RWPE1 (cell line): ENCODE measurements at regions of chr1 and their contacts with region 1.

Region 1: GRCh38 chr1:40763742-40764532 is 19.6 kb upstream of the KCNQ4 start:
- DNase-seq: no peak
- H3K27ac ChIP-seq: no peak overlapping the region
- CTCF ChIP-seq: no peak

Region 2: DNA sequence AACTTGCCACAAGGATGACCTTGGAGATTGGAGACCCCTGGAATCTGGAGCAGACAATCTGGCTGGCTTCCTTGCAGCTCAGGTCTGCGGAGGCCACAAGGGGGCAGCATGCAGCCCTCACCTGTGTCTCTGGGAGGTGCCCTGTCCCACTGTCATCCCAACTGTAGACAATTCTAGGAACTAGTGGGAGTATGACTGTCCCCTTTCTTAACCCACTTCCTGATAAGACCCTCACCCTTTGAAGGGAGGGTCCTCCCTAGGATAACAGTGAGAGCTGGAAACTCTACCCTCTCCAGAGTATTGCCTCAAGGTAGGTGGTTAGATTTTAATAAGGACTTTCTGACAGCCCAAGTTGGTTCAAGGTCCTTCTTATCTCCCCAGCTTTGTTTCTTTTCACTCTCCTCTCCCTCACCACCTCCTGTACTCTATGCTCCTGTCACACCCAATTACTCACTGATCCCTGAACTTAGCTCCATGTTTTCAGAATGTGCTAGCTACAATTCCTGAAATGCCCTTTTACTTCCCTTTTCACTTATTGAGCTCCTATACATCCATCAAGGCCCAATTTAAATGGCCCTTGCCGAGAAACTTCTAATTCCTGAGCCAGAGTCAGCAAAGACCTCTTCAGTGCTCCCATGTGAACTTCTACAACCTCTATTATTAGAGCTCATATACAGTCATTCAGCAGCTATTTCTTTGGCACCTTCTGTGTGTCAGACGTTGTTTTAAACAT is 10.5 kb after region 1 on chr1:
- CTCF ChIA-PET with region 1: interaction called, 16 read pairs
- POLR2A ChIA-PET with region 1: no interaction called
- DNase-seq: peak; percentile 23
- H3K27ac ChIP-seq: no peak overlapping the region
- CTCF ChIP-seq: peak; percentile 70